PC-9 (cell line): ENCODE measurements at regions of chr16 and their contacts with region 1.

Region 1: GRCh38 chr16:47888142-47888541 is 267.7 kb downstream of the ABCC12 start:
- DNase-seq: peak; percentile 62 to 73
- H3K4me3 ChIP-seq: no peak overlapping the region
- H3K27ac ChIP-seq: peak overlapping the region; percentile 68
- H3K4me1 ChIP-seq: peaks cover 21% of the 10 kb centered on the region
- H3K27me3 ChIP-seq: no peaks in the 10 kb centered on the region
- CTCF ChIP-seq: no peak

Region 2: DNA sequence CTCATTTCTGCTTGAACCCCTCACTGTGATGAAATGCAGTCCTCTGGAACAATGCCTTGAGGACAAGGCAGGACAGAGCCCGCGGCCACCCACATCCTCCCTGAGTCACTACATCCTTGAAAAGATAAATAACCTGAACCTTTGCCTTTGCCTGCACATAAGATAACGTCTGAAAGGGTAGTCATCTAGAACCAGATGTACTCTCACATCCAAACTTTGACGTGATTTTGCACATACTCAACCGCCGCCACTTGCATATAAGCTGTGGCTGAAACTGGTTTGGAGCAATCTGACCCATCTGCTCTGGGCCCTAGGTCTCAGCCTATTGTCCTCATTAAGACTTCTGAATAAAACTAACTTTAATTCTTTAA is 174.9 kb before region 1 on chr16:
- CTCF ChIA-PET with region 1: no interaction called
- POLR2A ChIA-PET with region 1: no interaction called
- intact Hi-C with region 1: loop called (anchors 5 kb)
- DNase-seq: peak; percentile 31 to 64
- H3K4me3 ChIP-seq: no peak overlapping the region
- H3K27ac ChIP-seq: no peak overlapping the region
- H3K4me1 ChIP-seq: peaks cover 44% of the 10 kb centered on the region
- H3K27me3 ChIP-seq: no peaks in the 10 kb centered on the region
- CTCF ChIP-seq: no peak

Region 3: GRCh38 chr16:47928008-47928407 is 39.9 kb after region 1 on chr16:
- CTCF ChIA-PET with region 1: no interaction called
- POLR2A ChIA-PET with region 1: no interaction called
- intact Hi-C with region 1: loop called (anchors 1 kb)
- DNase-seq: no peak
- H3K4me3 ChIP-seq: no peak overlapping the region
- H3K27ac ChIP-seq: no peak overlapping the region
- H3K4me1 ChIP-seq: peaks cover 23% of the 10 kb centered on the region
- H3K27me3 ChIP-seq: no peaks in the 10 kb centered on the region
- CTCF ChIP-seq: no peak

Region 4: DNA sequence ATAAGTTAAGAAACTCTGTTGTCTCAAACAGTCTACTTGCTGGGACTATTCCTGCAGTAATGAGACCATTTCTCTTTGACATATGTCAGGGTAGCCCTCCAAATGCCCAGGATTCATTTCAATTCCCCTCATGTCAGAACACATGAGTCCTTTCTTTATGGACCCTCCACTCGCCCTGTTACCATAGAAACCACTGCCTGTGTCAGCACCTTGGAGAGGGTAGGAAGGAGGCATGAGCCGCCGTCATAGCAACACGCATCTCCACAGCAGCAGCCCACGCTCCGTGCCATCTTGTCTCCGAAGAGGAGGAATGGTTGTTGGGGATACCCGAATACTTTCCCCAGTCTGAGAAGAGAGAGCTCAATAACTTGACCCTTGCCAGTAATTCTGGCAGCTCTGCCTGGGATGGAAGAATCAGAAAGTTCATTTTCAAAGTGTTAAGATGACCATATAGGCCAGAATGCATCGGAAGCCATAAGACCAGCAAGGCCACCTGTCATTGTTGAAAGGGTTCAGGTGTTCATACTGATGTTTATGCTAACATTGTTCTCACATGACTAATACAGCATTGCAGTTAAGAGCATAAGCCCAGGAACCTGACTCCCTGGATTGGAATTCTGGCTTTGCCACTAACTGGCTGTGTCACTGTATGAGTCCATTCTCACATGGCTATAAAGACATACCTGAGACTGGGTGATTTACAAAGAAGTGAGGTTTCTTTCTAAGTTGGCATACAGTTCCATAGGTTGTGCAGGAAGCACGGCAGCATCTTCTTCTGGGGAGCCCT is 126.4 kb after region 1 on chr16:
- CTCF ChIA-PET with region 1: no interaction called
- POLR2A ChIA-PET with region 1: no interaction called
- intact Hi-C with region 1: loop called (anchors 5 kb)
- DNase-seq: peak; percentile 55 to 95
- H3K4me3 ChIP-seq: no peak overlapping the region
- H3K27ac ChIP-seq: peak overlapping the region; percentile 89
- H3K4me1 ChIP-seq: peaks cover 16% of the 10 kb centered on the region
- H3K27me3 ChIP-seq: no peaks in the 10 kb centered on the region
- CTCF ChIP-seq: no peak

Region 5: DNA sequence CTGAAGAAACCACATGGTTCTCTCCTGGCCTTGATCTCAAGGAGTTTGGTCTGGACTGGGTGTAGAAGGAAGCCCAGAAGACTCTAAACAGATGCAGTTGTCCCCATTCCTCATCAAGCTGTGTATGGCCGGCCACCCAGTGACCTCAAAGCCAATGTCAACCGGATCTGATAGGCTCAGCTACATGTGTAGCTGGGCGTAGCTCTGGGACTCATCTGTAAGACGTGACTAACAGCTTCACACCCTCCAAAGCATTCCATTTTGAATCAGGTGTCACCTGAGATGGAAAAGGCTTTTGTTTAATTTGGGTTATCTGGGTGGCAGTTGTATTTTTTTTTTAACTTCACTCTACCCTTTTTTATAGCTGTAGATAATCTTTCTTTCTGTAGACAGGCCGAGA is 137.2 kb after region 1 on chr16:
- CTCF ChIA-PET with region 1: no interaction called
- POLR2A ChIA-PET with region 1: no interaction called
- intact Hi-C with region 1: loop called (anchors 1 kb)
- DNase-seq: peak; percentile 24 to 37
- H3K4me3 ChIP-seq: no peak overlapping the region
- H3K27ac ChIP-seq: no peak overlapping the region
- H3K4me1 ChIP-seq: peaks cover 7% of the 10 kb centered on the region
- H3K27me3 ChIP-seq: no peaks in the 10 kb centered on the region
- CTCF ChIP-seq: no peak

Region 6: DNA sequence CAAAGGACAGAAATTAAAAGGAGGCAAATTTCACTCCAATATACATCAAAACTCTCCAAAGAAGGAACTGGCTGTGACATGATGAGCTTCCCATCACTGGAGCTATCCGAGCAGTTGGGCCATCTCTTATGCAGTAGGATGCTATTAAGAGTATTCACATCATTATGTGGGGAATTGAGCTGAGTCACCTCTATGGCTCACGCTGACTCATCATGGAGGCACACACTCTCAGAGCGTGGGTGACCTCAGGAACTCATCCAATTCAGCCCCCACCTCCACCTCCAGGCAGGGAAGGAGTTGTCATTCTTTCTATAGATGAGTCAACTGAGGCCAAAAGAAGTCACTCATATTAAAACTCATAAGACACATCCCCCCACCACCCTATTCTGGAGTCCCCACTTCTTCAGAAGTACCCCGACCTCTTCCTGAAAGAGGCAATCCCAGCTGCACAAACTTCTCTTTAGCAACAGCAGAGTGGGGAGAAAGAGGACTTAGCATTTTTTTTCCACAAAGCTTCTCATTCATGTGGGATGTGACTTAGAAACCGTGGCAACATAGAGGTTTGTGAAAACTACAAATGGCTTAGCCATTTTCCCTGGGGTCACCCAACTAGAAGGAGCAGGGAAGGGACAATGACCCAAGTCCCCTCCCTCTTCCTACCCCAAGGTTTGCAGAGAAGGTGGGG is 235.1 kb after region 1 on chr16:
- CTCF ChIA-PET with region 1: no interaction called
- POLR2A ChIA-PET with region 1: no interaction called
- intact Hi-C with region 1: loop called (anchors 5 kb)
- DNase-seq: peak; percentile 79 to 92
- H3K4me3 ChIP-seq: no peak overlapping the region
- H3K27ac ChIP-seq: peak overlapping the region; percentile 84
- H3K4me1 ChIP-seq: peaks cover 55% of the 10 kb centered on the region
- H3K27me3 ChIP-seq: no peaks in the 10 kb centered on the region
- CTCF ChIP-seq: no peak

Region 7: DNA sequence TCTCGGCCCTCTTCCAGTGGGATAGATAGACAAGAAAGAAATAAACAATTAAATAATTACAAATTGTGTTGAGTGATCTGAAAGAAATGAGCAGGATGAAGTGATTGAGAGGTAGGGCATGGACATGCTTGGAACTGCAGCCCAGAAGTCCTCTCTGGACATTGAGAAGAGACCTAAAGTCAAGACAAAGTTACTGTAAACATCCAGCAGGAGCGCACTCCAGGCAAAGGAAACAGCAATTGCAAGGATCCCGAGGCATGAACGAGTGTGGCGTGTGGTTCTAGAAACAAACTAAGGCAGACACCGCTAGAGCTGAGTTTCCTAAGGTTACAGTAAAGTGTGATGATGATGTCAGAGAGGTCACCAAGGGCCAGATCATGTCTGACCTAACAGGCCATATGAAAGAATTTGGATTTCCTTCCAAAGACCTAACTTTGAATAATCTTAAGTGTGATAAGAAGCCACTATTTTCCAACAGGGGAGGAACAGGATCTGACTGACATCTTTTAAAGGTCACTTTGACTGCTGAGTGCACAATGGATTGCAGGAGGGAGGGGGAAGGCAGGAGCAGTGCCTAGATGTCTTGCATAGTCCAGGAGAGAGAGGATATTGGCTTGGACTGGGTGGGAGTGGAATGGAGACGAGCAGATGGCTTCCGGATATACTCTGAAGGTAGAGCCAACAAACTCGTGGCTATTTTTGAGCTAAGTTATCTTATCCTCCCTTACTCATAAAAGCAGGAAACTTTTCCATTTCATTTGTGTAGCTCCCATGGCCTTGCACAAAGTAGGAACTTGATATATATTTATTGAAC is 248.6 kb after region 1 on chr16:
- CTCF ChIA-PET with region 1: no interaction called
- POLR2A ChIA-PET with region 1: no interaction called
- intact Hi-C with region 1: no loop called
- DNase-seq: no peak
- H3K4me3 ChIP-seq: no peak overlapping the region
- H3K27ac ChIP-seq: no peak overlapping the region
- H3K4me1 ChIP-seq: no peaks in the 10 kb centered on the region
- H3K27me3 ChIP-seq: no peaks in the 10 kb centered on the region
- CTCF ChIP-seq: no peak

Region 8: GRCh38 chr16:48452977-48453760 is 565.0 kb after region 1 on chr16:
- CTCF ChIA-PET with region 1: no interaction called
- POLR2A ChIA-PET with region 1: no interaction called
- intact Hi-C with region 1: no loop called
- DNase-seq: peak in 1 of 2 experiments; percentile 4
- H3K4me3 ChIP-seq: no peak overlapping the region
- H3K27ac ChIP-seq: no peak overlapping the region
- H3K4me1 ChIP-seq: peaks cover 5% of the 10 kb centered on the region
- H3K27me3 ChIP-seq: no peaks in the 10 kb centered on the region
- CTCF ChIP-seq: no peak